CD4-positive, alpha-beta T cell (primary cell): ENCODE measurements at regions of chr17 and their contacts with region 1.

Region 1: DNA sequence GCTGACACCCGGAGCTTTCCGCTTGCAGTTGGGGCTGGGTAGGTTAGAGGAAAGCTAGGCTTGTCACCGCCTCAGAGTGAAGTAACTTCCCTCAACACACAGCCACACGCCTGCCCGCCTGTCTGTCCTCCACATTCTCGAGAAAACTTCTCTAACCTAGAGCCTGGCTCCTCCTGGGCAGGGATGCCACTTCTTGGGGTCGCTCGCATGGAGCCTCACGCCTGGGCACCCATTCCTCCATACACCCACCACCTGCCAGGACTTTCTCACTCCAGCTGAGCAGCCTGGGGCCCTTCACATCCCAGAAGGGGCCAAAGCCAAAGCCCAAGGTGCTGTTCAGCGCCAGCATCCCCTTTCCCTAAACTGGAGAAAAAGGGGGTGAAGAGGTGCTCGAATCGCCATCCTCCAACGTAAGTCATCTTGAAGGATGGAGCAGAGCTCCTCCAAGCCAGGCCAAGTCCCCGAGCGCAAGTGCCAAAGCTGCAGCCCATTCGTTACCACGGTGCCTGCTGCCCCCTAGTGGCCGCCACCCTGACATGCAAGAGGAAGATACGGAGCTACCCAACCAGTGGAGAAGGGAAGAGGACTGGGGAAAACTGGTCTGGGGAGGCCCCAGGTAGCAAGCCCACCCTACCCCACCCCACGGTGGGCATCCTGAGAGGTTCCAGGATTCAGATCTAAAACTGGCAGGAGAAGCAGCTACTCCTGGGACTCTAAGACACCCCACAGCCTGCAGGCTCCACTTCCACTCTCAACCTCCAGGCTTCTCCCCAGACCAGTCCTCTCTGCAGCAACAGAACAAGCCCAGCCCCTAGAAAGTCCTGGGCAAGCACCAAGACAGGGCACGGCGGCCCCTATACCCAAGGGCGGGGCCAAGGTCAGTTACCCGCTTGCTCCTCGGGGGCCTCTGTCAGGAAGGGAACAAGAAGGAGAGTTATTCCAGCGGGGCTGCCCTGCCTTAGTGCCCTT is 63.1 kb downstream of the MYO18A start:
- DNase-seq: peak; percentile 70 to 87 (median 74)
- ATAC-seq: peak; percentile 91
- H3K4me3 ChIP-seq: no peak overlapping the region
- H3K4me3 Mint-ChIP-seq: no peak overlapping the region
- H3K27ac ChIP-seq: no peak overlapping the region
- H3K27ac Mint-ChIP-seq: no peak overlapping the region
- H3K4me1 ChIP-seq: peaks cover 11% of the 10 kb centered on the region
- H3K4me1 Mint-ChIP-seq: peaks cover 5% of the 10 kb centered on the region
- H3K27me3 ChIP-seq: no peaks in the 10 kb centered on the region
- H3K27me3 Mint-ChIP-seq: no peaks in the 10 kb centered on the region
- CTCF ChIP-seq: peak; percentile 98

Region 2: GRCh38 chr17:28967221-28968140 is 149.6 kb before region 1 on chr17:
- CTCF ChIA-PET with region 1: interaction called, 36 read pairs
- POLR2A ChIA-PET with region 1: interaction called, 13 read pairs
- intact Hi-C with region 1: loop called (anchors 1 kb)
- DNase-seq: peak in 1 of 14 experiments; percentile 10
- ATAC-seq: no peak
- H3K4me3 ChIP-seq: no peak overlapping the region
- H3K4me3 Mint-ChIP-seq: no peak overlapping the region
- H3K27ac ChIP-seq: no peak overlapping the region
- H3K27ac Mint-ChIP-seq: no peak overlapping the region
- H3K4me1 ChIP-seq: peaks cover 3% of the 10 kb centered on the region
- H3K4me1 Mint-ChIP-seq: no peaks in the 10 kb centered on the region
- H3K27me3 ChIP-seq: peaks cover 0 to 5% of the 10 kb centered on the region in 2 experiments
- H3K27me3 Mint-ChIP-seq: peaks cover 9% of the 10 kb centered on the region
- CTCF ChIP-seq: no peak

Region 3: GRCh38 chr17:29042679-29043538 is 74.2 kb before region 1 on chr17 and contains the start of gene PIPOX:
- CTCF ChIA-PET with region 1: no interaction called
- POLR2A ChIA-PET with region 1: no interaction called
- intact Hi-C with region 1: no loop called
- DNase-seq: peak in 3 of 14 experiments; percentile 7 to 42 (median 36)
- ATAC-seq: no peak
- H3K4me3 ChIP-seq: no peak within 1 kb of the TSS
- H3K4me3 Mint-ChIP-seq: no peak within 1 kb of the TSS
- H3K27ac ChIP-seq: no peak within 1 kb of the TSS
- H3K27ac Mint-ChIP-seq: no peak within 1 kb of the TSS
- H3K4me1 ChIP-seq: peaks cover 8% of the 10 kb centered on the region
- H3K4me1 Mint-ChIP-seq: no peaks in the 10 kb centered on the region
- H3K27me3 ChIP-seq: peaks cover 9 to 12% of the 10 kb centered on the region in 2 experiments
- H3K27me3 Mint-ChIP-seq: peaks cover 31% of the 10 kb centered on the region
- CTCF ChIP-seq: no peak
- total RNA-seq, gene PIPOX: 2.4 to 4.4 TPM

Region 4: GRCh38 chr17:29069526-29070041 is 47.5 kb before region 1 on chr17:
- CTCF ChIA-PET with region 1: no interaction called
- POLR2A ChIA-PET with region 1: no interaction called
- intact Hi-C with region 1: no loop called
- DNase-seq: no peak
- ATAC-seq: no peak
- H3K4me3 ChIP-seq: no peak overlapping the region
- H3K4me3 Mint-ChIP-seq: no peak overlapping the region
- H3K27ac ChIP-seq: no peak overlapping the region
- H3K27ac Mint-ChIP-seq: no peak overlapping the region
- H3K4me1 ChIP-seq: no peaks in the 10 kb centered on the region
- H3K4me1 Mint-ChIP-seq: no peaks in the 10 kb centered on the region
- H3K27me3 ChIP-seq: no peaks in the 10 kb centered on the region
- H3K27me3 Mint-ChIP-seq: no peaks in the 10 kb centered on the region
- CTCF ChIP-seq: no peak

Region 5: DNA sequence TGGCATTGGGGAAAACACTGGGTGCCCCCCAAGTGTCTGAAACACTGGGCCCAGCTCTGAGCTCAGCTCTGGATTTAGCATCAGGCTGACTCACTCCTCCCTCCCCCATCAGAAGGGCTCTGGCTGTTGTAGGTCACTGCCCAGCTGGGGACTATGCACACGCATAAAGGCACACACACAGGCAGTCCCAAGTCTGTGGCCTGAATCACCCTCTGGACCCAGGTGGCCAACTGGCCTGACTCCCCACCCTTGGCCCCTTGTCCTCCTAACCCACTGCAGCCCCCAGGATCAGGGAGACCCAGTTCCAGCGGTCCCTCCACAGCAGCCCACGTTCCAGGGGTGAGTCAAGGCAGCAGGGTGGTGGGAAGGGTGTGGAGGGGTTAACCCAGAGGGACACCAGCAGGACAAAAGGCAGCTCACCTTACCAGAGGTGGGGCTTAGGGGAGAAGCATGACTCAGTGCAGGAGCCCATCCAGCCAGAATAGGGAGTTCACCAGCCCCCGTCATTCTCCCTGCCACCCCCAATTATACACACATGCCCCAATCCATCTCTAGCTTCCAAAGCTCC is 16.1 kb after region 1 on chr17:
- CTCF ChIA-PET with region 1: interaction called, 19 read pairs
- POLR2A ChIA-PET with region 1: no interaction called
- intact Hi-C with region 1: no loop called
- DNase-seq: no peak
- ATAC-seq: no peak
- H3K4me3 ChIP-seq: no peak overlapping the region
- H3K4me3 Mint-ChIP-seq: no peak overlapping the region
- H3K27ac ChIP-seq: no peak overlapping the region
- H3K27ac Mint-ChIP-seq: no peak overlapping the region
- H3K4me1 ChIP-seq: peaks cover 74% of the 10 kb centered on the region
- H3K4me1 Mint-ChIP-seq: peaks cover 41% of the 10 kb centered on the region
- H3K27me3 ChIP-seq: no peaks in the 10 kb centered on the region
- H3K27me3 Mint-ChIP-seq: no peaks in the 10 kb centered on the region
- CTCF ChIP-seq: no peak

Region 6: DNA sequence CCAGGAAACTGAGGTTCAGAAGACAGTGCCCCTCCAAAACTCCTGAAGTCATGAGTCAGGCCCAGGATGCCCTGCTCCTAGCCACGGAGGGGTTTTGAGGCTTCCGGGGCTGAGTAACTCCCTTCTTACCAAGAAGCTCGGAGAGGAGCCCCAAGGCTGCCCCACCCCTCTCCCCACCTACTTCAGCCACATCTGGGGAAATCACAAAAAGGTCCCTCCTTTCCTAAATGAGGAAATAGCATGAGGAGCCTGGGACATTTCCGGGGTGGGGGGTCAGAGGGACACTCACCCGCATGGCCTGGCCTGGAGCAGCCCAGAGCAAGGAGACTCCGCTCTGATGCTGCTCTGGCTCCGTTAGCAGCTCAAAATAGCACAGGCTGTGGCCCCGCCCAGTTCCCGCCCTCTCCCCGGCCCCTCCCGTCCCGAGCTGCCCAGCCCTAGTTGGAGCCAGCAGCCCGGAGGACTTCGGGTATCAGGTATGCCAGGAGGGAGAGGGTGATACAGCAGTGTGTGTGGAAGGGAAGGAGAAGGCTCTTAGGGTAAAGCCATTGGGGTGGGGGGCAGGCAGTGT is 23.0 kb after region 1 on chr17:
- CTCF ChIA-PET with region 1: interaction called, 94 read pairs
- POLR2A ChIA-PET with region 1: interaction called, 5 read pairs
- intact Hi-C with region 1: no loop called
- DNase-seq: peak; percentile 57 to 90 (median 78)
- ATAC-seq: peak; percentile 53
- H3K4me3 ChIP-seq: peak overlapping the region; percentile 64
- H3K4me3 Mint-ChIP-seq: peak overlapping the region; percentile 91
- H3K27ac ChIP-seq: peak overlapping the region; percentile 78 to 82
- H3K27ac Mint-ChIP-seq: peak overlapping the region; percentile 96
- H3K4me1 ChIP-seq: peaks cover 80% of the 10 kb centered on the region
- H3K4me1 Mint-ChIP-seq: peaks cover 70% of the 10 kb centered on the region
- H3K27me3 ChIP-seq: no peaks in the 10 kb centered on the region
- H3K27me3 Mint-ChIP-seq: no peaks in the 10 kb centered on the region
- CTCF ChIP-seq: no peak

Region 7: DNA sequence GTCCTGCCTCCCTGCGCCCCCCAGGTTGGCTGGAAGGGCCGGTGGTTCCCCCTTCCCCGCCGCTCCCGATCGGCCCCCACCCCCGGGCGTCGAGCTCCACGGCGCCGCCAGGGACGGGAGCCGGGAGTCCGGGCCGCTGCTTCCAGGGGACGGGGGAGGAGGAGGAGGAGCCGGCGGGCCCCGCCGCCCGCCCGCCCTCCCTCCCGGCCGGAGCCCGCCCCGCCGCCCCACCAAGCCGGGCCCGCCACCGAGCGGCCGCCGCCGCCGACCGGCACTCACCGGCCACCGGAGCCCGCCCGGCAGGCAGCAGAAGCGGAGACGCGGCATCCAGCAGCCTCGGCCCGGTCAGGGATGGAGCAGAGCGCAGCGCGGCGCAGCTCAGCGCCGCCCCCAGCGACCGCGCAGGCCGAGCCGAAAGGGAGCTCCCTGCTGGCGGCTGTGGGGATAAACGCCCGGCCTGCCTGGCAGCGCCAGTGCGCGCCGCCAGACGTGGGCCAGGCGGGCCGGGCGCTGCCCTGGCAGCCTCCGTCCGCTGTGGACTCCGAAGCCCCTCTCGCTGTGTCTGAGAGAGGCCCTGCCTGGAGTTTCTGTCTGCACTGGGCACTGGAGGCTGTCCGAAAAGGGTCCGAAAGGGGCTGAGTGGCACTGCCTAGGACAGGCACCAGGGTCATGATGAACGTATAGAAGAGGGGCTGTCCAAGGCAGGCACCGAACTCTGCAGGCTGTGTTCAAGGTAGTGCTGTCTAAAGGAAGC is 63.1 kb after region 1 on chr17 and contains the start of gene MYO18A:
- CTCF ChIA-PET with region 1: interaction called, 10 read pairs
- POLR2A ChIA-PET with region 1: no interaction called
- intact Hi-C with region 1: no loop called
- DNase-seq: peak; percentile 53 to 90 (median 76)
- ATAC-seq: peak; percentile 91
- H3K4me3 ChIP-seq: peak within 1 kb of the TSS; percentile 21
- H3K4me3 Mint-ChIP-seq: peak within 1 kb of the TSS; percentile 75
- H3K27ac ChIP-seq: no peak within 1 kb of the TSS
- H3K27ac Mint-ChIP-seq: no peak within 1 kb of the TSS
- H3K4me1 ChIP-seq: peaks cover 45% of the 10 kb centered on the region
- H3K4me1 Mint-ChIP-seq: peaks cover 34% of the 10 kb centered on the region
- H3K27me3 ChIP-seq: no peaks in the 10 kb centered on the region
- H3K27me3 Mint-ChIP-seq: no peaks in the 10 kb centered on the region
- CTCF ChIP-seq: peak; percentile 75
- total RNA-seq, gene MYO18A: 87.0 to 90.1 TPM

Region 8: DNA sequence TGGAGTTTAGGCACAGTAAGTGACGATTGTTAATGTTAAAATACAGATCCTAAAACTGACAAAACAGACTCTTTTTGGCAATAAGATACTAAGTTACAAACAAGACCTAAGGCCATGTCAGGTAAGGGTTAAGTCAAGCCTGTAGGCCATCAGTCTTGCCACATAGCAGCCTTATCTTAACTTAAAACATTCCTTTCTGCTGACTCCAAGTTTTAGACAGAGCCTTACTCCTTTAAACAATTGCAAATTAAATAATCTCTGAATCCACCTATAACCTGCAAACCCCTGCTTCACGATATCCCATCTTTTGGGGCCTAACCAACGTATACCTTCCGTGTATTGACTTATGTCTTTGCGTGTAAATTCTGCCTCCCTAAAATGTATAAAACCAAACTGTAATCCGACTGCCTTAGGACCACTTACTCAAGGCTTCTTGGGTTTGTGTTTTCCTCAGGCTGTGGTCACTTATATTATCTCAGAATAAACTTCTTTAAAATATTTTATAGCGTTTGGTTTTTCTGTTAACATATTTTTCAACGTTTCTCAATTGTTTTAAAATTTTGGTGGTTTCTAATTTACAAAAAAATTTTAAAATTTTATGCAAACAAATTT is 888.7 kb after region 1 on chr17:
- CTCF ChIA-PET with region 1: no interaction called
- POLR2A ChIA-PET with region 1: no interaction called
- intact Hi-C with region 1: no loop called
- DNase-seq: no peak
- ATAC-seq: no peak
- H3K4me3 ChIP-seq: no peak overlapping the region
- H3K4me3 Mint-ChIP-seq: no peak overlapping the region
- H3K27ac ChIP-seq: no peak overlapping the region
- H3K27ac Mint-ChIP-seq: no peak overlapping the region
- H3K4me1 ChIP-seq: peaks cover 2% of the 10 kb centered on the region
- H3K4me1 Mint-ChIP-seq: peaks cover 2% of the 10 kb centered on the region
- H3K27me3 ChIP-seq: no peaks in the 10 kb centered on the region
- H3K27me3 Mint-ChIP-seq: no peaks in the 10 kb centered on the region
- CTCF ChIP-seq: no peak